AG04450 (cell line): ENCODE measurements at regions of chr19 and their contacts with region 1.

Region 1: GRCh38 chr19:6048808-6049405 is 61.4 kb downstream of the RFX2 start:
- DNase-seq: no peak
- H3K4me3 ChIP-seq: no peak overlapping the region
- H3K27ac ChIP-seq: no peak overlapping the region
- H3K27me3 ChIP-seq: no peaks in the 10 kb centered on the region
- CTCF ChIP-seq: peak; percentile 95

Region 2: DNA sequence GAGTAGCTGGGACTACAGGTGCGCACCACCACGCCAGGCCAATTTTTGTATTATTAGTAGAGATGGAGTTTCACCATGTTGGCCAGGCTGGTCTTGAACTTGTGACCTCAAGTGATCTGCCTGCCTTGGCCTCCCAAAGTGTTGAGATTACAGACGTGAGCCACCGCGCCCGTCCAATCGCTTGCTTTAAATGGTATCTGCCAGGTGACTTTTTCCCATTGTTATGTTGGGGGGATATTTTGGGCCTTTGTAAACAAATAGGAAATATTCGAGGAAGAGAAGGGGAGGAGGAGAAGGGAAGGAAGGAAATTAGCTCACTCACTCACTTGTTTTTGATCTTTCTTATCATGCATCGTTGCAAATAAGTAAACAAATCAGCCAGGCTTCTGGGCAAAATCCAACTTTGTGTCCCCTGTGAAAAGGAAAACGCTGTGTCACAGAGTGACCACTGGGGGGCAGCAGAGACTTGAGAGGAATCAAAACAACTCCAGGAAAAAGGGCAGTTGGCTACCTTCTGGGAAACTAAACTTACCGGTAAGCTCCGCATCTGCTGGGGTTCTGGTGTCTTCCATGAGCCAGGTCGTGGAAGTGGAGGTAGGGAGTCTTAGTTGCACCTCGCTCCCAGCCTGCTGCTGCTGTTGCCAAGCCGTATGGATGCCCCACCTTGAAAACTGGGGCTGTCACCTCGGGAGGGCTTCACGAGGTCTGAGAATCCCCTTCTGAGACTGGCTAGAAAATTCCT is 61.7 kb before region 1 on chr19:
- CTCF ChIA-PET with region 1: interaction called, 55 read pairs
- POLR2A ChIA-PET with region 1: no interaction called
- DNase-seq: peak; percentile 51
- H3K4me3 ChIP-seq: peak overlapping the region; percentile 53
- H3K27ac ChIP-seq: no peak overlapping the region
- H3K27me3 ChIP-seq: no peaks in the 10 kb centered on the region
- CTCF ChIP-seq: peak; percentile 95

Region 3: GRCh38 chr19:6076675-6077463 is 28.0 kb after region 1 on chr19:
- CTCF ChIA-PET with region 1: interaction called, 12 read pairs
- POLR2A ChIA-PET with region 1: no interaction called
- DNase-seq: peak; percentile 65
- H3K4me3 ChIP-seq: peak overlapping the region; percentile 3; the same call in 1 of the 2 replicates
- H3K27ac ChIP-seq: peak overlapping the region; percentile 87
- H3K27me3 ChIP-seq: no peaks in the 10 kb centered on the region
- CTCF ChIP-seq: no peak

Region 4: DNA sequence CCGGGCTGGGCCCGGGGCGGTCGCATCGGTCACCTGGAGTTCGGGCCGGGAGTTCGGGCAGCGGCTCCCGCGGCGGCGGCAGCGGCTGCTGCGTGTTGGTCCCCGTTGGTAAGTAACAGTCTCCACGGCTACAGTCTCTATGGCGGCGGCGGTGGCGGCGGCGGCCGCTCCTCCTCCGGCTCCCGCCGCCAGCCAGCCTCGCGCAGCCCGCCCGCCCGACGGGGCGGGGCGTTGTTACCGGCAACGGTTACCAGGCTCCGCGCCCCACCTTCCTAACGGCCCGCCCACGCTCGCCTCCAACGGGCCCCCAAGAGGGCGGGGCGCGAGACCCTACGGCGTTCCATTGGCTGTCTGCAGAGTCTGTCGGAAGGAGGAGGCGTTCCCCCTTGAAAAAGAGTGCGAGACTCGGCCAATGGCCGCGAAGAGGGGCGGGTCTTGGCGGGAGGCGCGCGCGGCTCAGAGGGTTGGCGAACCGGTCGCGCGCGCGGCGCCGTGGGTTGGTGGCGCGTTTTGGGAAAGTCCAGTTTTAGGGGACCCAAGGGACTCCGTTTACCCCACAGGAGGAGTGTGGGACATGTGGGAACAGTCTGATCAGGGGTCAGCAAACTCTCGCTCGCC is 61.6 kb after region 1 on chr19 and contains the start of gene RFX2:
- CTCF ChIA-PET with region 1: interaction called, 12 read pairs
- POLR2A ChIA-PET with region 1: no interaction called
- DNase-seq: peak; percentile 95
- H3K4me3 ChIP-seq: peak within 1 kb of the TSS; percentile 69
- H3K27ac ChIP-seq: no peak within 1 kb of the TSS
- H3K27me3 ChIP-seq: no peaks in the 10 kb centered on the region
- CTCF ChIP-seq: no peak
- polyA plus RNA-seq, gene RFX2: 2.7 and 2.9 TPM in 2 replicates

Region 5: DNA sequence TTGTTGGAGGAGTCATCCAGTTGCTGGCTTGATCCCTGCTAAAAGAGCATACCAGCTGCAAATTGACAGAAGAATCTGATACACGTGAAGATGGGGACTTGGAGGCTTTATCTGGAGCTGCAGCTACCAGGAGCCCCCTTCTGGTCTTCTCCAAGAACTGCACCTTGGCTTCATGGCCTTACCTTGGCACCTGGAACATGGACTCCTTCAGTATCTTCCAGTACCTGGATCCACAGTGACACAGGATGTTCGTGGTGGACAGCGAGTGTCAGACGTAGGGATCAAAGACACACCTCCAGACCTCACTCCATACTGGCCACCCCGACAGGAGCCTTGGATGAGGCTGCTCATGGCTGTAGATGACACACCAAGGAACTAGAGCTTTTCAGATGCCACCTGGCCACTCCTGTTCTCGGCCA is 76.7 kb after region 1 on chr19:
- CTCF ChIA-PET with region 1: interaction called, 158 read pairs
- POLR2A ChIA-PET with region 1: interaction called, 3 read pairs
- DNase-seq: peak; percentile 48
- H3K4me3 ChIP-seq: no peak overlapping the region
- H3K27ac ChIP-seq: no peak overlapping the region
- H3K27me3 ChIP-seq: no peaks in the 10 kb centered on the region
- CTCF ChIP-seq: peak; percentile 98

Region 6: DNA sequence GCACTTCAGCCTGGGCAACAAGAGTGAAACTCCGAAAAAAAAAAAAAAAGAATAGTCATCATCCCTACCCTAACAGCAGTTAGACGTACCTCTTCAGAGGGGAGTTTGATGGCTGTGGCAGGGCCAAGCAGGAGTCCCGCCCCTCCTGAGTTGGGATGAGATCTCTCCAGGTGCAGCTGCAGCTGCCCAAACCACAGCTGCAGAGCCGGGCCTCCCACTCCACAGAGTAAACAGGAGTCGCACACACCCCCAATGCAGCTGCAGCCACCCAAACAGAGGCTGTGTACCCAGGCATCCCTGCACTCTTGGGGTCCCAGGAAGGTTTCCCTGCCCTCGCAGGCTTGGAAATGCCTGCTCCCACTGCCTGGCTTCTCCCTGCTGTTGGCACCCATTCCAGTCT is 248.3 kb after region 1 on chr19:
- CTCF ChIA-PET with region 1: interaction called, 10 read pairs
- POLR2A ChIA-PET with region 1: no interaction called
- DNase-seq: no peak
- H3K4me3 ChIP-seq: no peak overlapping the region
- H3K27ac ChIP-seq: no peak overlapping the region
- H3K27me3 ChIP-seq: peaks cover 5% of the 10 kb centered on the region
- CTCF ChIP-seq: no peak

Region 7: DNA sequence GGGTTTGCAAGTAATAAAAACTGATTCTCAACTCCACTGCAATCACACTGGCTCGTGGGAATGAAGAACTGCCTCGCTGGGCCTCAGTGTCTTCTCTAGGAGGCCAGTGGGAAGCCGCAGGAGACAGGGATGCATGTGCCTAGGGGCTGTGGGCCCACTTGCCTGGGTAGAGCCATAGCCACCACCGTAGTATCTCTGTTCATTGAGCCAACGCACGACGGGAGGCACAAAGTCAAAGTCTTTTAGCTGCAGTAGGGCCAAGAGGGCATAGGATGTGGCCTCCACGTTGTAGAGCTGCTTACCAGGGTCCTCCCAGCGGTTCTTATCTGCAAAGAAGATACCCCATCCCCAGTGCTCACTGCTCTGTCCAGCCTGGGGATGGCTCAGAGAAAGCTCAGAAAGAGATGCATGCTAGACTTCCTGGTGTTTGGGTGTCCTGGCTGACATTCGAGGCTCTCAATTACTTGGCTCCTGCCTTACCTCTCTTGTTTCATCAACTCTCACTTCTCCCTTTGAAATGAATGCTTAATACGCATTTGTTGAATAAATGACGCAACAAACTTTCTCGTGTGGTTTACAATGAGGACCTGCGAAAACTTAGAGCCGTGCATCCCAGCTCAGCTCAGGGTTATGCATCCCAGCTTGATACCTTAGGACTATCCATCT is 637.2 kb after region 1 on chr19:
- CTCF ChIA-PET with region 1: no interaction called
- POLR2A ChIA-PET with region 1: no interaction called
- DNase-seq: no peak
- H3K4me3 ChIP-seq: no peak overlapping the region
- H3K27ac ChIP-seq: no peak overlapping the region
- H3K27me3 ChIP-seq: no peaks in the 10 kb centered on the region
- CTCF ChIP-seq: no peak